CD8-positive, alpha-beta memory T cell (primary cell): ENCODE measurements at regions of chr18 and their contacts with region 1.

Region 1: GRCh38 chr18:31722369-31722957 is 38.1 kb upstream of the B4GALT6 start:
- DNase-seq: peak; percentile 38 to 71 (median 41)
- H3K4me3 ChIP-seq: no peak overlapping the region
- H3K4me3 Mint-ChIP-seq: no peak overlapping the region
- H3K27ac ChIP-seq: no peak overlapping the region
- H3K27ac Mint-ChIP-seq: peak overlapping the region in 1 of 8 donors; percentile 25
- H3K4me1 ChIP-seq: no peaks in the 10 kb centered on the region
- H3K4me1 Mint-ChIP-seq: peaks cover 0 to 6% (median 2%) of the 10 kb centered on the region in 3 donors
- H3K27me3 ChIP-seq: peaks cover 4% of the 10 kb centered on the region
- H3K27me3 Mint-ChIP-seq: peaks cover 8 to 38% of the 10 kb centered on the region in 2 donors

Region 2: DNA sequence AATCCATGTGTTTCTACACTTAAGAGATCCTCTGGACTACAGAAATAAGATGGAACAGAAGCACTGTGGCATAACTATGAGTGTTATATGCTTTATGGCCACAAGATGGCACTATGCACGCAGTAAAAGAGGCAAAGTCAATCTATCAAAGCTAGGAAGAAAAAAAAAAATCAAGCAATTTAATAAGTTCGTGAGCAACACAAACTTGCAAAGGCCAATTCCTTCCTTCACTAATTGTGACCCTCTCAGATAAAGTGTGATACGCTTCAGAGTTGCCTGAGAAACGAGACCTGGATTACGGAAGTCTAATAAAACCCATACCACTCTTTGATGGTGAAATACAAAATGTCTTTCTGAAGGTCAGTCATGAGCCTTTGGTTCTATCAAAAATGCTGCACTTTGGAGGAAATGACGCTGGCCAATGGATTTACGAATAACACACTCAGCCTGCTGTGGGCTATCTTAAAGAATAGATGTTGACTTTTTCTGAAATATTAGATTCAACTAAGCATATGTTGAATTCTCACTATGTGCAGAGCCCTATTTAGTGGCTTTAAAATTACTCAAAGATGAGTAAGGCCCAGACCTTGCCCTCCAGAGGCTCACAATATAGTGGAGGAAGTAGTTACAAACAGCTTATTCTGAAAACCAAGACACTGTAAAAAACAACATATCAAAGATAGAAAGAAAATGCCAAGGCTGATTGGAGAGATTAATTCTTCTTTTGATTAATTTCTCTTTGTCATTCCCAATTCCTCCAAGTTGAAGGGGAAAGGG is 166.3 kb before region 1 on chr18:
- CTCF ChIA-PET with region 1: interaction called, 10 read pairs
- POLR2A ChIA-PET with region 1: no interaction called
- DNase-seq: peak in 3 of 5 donors; percentile 22 to 51 (median 31)
- H3K4me3 ChIP-seq: no peak overlapping the region
- H3K4me3 Mint-ChIP-seq: no peak overlapping the region
- H3K27ac ChIP-seq: no peak overlapping the region
- H3K27ac Mint-ChIP-seq: no peak overlapping the region
- H3K4me1 ChIP-seq: no peaks in the 10 kb centered on the region
- H3K4me1 Mint-ChIP-seq: peaks cover 0 to 2% (median 0%) of the 10 kb centered on the region in 3 donors
- H3K27me3 ChIP-seq: no peaks in the 10 kb centered on the region
- H3K27me3 Mint-ChIP-seq: peaks cover 8 to 28% of the 10 kb centered on the region in 2 donors

Region 3: GRCh38 chr18:31680831-31681568 is 41.5 kb before region 1 on chr18:
- CTCF ChIA-PET with region 1: no interaction called
- POLR2A ChIA-PET with region 1: no interaction called
- DNase-seq: no peak
- H3K4me3 ChIP-seq: no peak overlapping the region
- H3K4me3 Mint-ChIP-seq: peak overlapping the region in 1 of 7 donors; percentile 2
- H3K27ac ChIP-seq: no peak overlapping the region
- H3K27ac Mint-ChIP-seq: peak overlapping the region in 1 of 8 donors; percentile 0
- H3K4me1 ChIP-seq: no peaks in the 10 kb centered on the region
- H3K4me1 Mint-ChIP-seq: peaks cover 12 to 18% (median 15%) of the 10 kb centered on the region in 3 donors
- H3K27me3 ChIP-seq: peaks cover 3% of the 10 kb centered on the region
- H3K27me3 Mint-ChIP-seq: peaks cover 14 to 64% of the 10 kb centered on the region in 2 donors

Region 4: DNA sequence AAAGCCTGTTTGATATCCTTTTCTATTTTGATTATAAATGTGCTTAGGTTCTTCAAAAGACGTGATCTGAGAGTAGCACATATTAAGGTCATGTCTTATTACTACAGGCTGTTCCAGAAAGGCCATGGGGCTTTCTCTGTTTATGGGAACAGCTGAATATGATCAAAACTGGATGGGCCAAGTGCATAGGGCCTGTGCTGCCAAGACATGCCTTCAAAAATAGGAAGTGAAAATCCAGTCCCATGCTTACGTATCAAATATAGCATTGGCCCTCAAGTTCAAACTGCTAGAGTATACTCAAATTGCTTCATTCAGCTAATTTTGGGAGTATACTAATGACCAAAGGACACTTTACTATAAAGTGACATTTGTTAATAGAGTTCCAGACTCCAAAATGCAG is 14.2 kb after region 1 on chr18:
- CTCF ChIA-PET with region 1: interaction called, 11 read pairs
- POLR2A ChIA-PET with region 1: no interaction called
- DNase-seq: no peak
- H3K4me3 ChIP-seq: no peak overlapping the region
- H3K4me3 Mint-ChIP-seq: no peak overlapping the region
- H3K27ac ChIP-seq: no peak overlapping the region
- H3K27ac Mint-ChIP-seq: no peak overlapping the region
- H3K4me1 ChIP-seq: no peaks in the 10 kb centered on the region
- H3K4me1 Mint-ChIP-seq: no peaks in the 10 kb centered on the region
- H3K27me3 ChIP-seq: no peaks in the 10 kb centered on the region
- H3K27me3 Mint-ChIP-seq: peaks cover 0 to 2% of the 10 kb centered on the region in 2 donors